Activated CD4-positive, alpha-beta T cell treated with anti-CD3 and anti-CD28 coated beads for 36 hours (primary cell): ENCODE measurements at regions of chr10 and their contacts with region 1.

Region 1: DNA sequence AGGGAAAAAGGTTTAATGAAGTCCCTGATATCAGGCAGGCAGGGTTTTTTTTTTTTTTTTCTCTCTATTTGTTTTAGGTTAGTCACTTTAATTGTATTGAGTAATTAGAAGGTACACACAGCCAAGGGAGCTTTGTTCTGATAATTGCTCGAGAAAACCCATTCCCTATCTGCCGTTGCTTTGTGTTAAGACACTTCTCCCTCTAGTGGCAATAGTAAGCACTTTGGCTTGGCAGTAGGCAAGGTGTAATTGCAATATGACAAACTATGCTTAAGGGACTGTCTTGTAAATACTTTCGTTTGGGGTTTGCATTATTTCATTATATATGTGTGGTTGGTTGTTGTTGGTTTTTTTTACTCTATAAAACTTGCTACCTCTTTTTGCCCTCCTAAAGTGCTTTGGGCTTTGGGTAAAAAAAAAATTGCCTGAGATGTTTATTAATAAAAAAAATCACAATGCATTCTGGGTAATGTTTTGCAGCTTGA is 113.4 kb downstream of the BTRC start:
- DNase-seq: peak; percentile 23
- ATAC-seq: peak; percentile 96
- H3K4me3 Mint-ChIP-seq: no peak overlapping the region
- H3K27ac Mint-ChIP-seq: no peak overlapping the region
- H3K4me1 Mint-ChIP-seq: peaks cover 9% of the 10 kb centered on the region
- H3K27me3 Mint-ChIP-seq: no peaks in the 10 kb centered on the region

Region 2: DNA sequence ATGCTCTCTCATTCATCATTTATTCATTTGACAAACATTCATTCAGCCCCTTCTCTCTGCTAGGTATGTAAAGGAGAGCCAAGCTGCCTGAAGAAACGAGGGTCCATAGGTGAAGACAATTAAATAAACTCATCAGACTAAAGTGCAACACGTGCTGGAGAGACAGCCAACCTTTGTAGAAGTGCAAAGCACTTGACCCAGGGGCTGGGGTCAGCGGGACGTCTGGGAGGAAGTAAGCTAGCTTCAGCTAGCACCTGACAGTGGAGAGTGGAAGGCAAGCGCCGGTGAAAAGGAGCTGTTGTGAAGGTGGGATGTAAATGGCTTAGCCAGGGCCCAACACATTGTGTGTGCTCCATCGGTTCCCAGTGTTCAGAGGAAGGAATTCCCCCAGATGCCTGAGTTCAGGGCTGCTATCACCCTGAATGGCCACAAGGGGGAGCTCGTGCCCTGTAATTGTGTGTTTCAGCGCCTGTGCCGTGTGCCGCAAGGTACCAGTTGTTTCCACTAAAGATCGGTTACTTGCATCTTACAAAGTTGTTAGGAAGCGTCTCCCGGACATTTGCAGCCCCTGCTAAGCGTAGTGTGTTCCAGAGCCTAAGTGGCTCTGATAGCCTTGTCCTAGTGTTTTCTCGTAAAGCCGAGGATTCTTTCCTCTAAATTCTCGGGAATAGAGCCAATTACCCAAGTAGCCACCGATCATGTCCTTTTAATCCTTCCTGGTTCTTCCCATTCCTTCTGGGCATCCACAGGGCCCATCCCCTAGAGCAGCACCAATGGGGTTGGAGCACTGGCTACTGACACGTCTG is 305.6 kb before region 1 on chr10:
- CTCF ChIA-PET with region 1: no interaction called
- POLR2A ChIA-PET with region 1: no interaction called
- intact Hi-C with region 1: loop called in 1 of 2 experiments (anchors 1 kb)
- DNase-seq: peak; percentile 85
- ATAC-seq: peak; percentile 83
- H3K4me3 Mint-ChIP-seq: no peak overlapping the region
- H3K27ac Mint-ChIP-seq: no peak overlapping the region
- H3K4me1 Mint-ChIP-seq: peaks cover 10% of the 10 kb centered on the region
- H3K27me3 Mint-ChIP-seq: peaks cover 54% of the 10 kb centered on the region

Region 3: DNA sequence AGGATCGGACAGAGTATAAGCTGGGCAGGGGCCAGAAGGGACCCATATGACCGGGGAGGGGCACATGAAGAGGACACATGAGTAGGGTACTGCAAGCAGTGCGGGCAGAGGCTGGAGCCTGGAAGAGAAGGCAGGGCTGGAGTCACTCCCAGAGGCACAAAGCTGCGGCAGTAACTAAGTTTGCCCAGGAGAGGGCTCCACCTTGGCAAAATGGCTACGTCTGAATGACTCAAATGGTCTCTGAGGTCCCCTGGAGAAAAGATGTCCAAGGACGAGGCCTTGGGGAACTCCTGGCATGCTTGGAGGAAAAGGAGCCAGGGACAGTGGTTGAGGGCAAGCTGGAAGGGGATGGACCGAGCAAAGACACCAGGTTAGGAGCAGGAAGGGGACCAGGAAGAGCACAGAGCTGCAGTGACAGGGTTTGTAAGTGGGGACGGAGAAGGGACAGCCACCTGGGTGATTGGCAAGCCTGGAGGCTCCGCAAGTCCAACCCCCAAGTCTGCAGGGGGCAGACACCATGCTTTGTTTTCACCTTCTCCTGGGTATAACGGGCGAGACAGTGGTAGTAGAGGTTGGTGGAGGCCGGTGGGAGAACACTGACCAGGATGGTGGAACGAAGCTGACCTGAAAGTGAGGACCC is 195.0 kb before region 1 on chr10:
- CTCF ChIA-PET with region 1: interaction called, 17 read pairs
- POLR2A ChIA-PET with region 1: no interaction called
- intact Hi-C with region 1: no loop called
- DNase-seq: peak; percentile 78
- ATAC-seq: peak; percentile 91
- H3K4me3 Mint-ChIP-seq: no peak overlapping the region
- H3K27ac Mint-ChIP-seq: no peak overlapping the region
- H3K4me1 Mint-ChIP-seq: peaks cover 2% of the 10 kb centered on the region
- H3K27me3 Mint-ChIP-seq: peaks cover 23% of the 10 kb centered on the region

Region 4: DNA sequence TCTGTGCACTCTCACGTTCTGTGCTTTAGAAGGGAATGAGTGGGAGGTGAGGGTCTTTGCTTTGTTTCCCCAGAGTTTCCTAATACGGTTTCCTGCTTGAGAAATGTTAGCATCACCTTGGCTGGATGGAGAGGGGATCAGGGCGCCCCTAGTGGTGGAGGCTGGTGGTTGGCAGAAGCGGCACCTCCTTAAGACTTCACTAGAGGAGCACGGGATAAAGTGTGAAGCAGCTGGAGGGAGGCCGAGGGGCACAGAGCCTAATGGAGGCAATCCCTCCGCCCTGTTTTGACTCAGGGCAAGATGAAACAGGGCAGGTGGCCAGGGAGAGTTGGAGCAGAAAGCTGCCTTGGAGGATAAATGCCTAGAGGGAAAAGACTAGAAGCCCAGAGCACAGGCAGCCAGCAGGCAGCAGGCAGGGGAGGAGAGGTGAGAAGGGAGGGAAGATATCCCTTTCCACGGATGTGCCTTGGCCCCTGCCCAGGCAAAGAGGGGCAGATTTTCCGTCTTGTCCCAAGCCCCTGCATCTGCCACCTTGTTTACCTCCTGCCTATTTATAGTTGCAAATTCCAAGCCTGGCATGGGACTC is 169.3 kb before region 1 on chr10:
- CTCF ChIA-PET with region 1: interaction called, 12 read pairs
- POLR2A ChIA-PET with region 1: no interaction called
- intact Hi-C with region 1: loop called in 1 of 2 experiments (anchors 1 kb)
- DNase-seq: peak; percentile 89
- ATAC-seq: peak; percentile 90
- H3K4me3 Mint-ChIP-seq: no peak overlapping the region
- H3K27ac Mint-ChIP-seq: no peak overlapping the region
- H3K4me1 Mint-ChIP-seq: peaks cover 2% of the 10 kb centered on the region
- H3K27me3 Mint-ChIP-seq: peaks cover 41% of the 10 kb centered on the region

Region 5: DNA sequence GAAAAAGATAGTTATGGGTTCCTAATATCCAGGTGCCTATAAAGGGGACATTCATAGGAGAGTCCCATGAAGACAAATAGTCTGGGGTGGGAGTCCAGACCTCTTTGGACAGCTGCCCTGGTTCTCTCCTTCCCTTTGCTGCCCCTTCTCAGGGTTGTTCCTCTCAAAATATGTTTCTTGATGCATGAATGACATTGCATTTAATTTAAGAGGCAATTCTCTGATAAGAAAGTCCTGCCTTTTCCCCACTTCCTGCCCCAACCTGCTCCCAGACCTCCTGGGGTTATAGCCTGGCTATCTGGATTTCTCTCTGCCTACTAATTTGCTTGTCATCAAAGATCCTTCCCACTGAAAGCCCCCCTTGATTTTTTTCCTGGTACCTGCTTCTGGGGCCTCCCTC is 125.9 kb before region 1 on chr10:
- CTCF ChIA-PET with region 1: no interaction called
- POLR2A ChIA-PET with region 1: no interaction called
- intact Hi-C with region 1: no loop called
- DNase-seq: no peak
- ATAC-seq: no peak
- H3K4me3 Mint-ChIP-seq: no peak overlapping the region
- H3K27ac Mint-ChIP-seq: no peak overlapping the region
- H3K4me1 Mint-ChIP-seq: no peaks in the 10 kb centered on the region
- H3K27me3 Mint-ChIP-seq: peaks cover 2% of the 10 kb centered on the region

Region 6: DNA sequence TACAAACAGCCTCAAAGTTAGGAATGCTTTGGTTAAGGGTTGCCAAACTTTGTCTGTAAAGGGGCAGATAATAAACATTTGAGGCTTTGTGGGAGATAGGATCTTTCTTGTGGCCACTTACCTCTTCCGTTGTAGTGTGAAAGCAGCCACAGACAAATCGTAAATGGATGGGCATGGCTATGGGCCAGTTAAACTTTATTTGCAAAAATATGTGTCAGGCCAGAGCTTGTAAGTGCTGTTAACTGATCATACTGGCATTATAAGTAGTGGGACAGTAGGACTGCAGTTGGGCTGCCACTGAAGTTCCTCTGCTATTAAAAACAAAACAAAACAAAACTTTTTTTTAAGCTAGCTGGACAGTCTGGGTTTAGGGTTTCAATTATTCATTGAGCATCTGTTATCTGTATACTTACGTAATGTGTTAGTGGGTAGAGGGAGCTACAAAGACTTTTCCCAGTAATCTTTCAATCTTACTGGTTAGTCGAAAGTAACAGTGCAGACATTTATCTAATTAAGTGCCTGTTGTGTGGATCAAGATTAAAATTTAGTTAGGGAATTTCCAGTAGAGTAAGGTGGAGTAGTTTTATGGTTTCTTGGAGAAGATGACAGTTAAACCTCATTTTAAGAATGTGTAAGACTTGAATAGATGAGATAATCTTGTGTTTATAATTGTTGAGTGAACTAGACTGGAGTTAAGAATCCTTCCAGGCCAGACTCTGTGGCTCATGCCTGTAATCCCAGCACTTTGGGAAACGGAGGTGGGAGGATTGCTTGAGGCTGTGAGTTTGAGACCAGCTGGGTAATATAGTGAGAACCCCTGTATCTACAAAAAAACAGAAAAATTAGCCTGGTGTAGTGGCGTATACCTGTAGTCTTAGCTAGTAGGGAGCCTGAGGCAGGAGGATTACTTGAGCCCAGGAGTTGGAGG is 13.3 kb before region 1 on chr10:
- CTCF ChIA-PET with region 1: interaction called, 66 read pairs
- POLR2A ChIA-PET with region 1: interaction called, 12 read pairs
- intact Hi-C with region 1: no loop called
- DNase-seq: no peak
- ATAC-seq: peak; percentile 44
- H3K4me3 Mint-ChIP-seq: no peak overlapping the region
- H3K27ac Mint-ChIP-seq: no peak overlapping the region
- H3K4me1 Mint-ChIP-seq: peaks cover 30% of the 10 kb centered on the region
- H3K27me3 Mint-ChIP-seq: no peaks in the 10 kb centered on the region

Region 7: GRCh38 chr10:101569838-101570766 is 102.8 kb after region 1 on chr10:
- CTCF ChIA-PET with region 1: interaction called, 6 read pairs
- POLR2A ChIA-PET with region 1: interaction called, 3 read pairs
- intact Hi-C with region 1: loop called (anchors 1 to 5 kb)
- DNase-seq: peak; percentile 91
- ATAC-seq: peak; percentile 79
- H3K4me3 Mint-ChIP-seq: peak overlapping the region; percentile 62
- H3K27ac Mint-ChIP-seq: no peak overlapping the region
- H3K4me1 Mint-ChIP-seq: peaks cover 18% of the 10 kb centered on the region
- H3K27me3 Mint-ChIP-seq: peaks cover 40% of the 10 kb centered on the region